HCT116 (cell line): ENCODE measurements at regions of chr2 and their contacts with region 1.

Region 1: GRCh38 chr2:230798769-230799399 is 65.9 kb upstream of the ITM2C start:
- DNase-seq: no peak
- ATAC-seq: 0 out of 2 replicates have a peak, but pooled peaks have one; percentile 33
- H3K4me3 ChIP-seq: no peak overlapping the region
- H3K27ac ChIP-seq: no peak overlapping the region
- H3K4me1 ChIP-seq: peaks cover 32 to 48% of the 10 kb centered on the region in 2 experiments
- H3K27me3 ChIP-seq: no peaks in the 10 kb centered on the region
- CTCF ChIP-seq: peak; percentile 61 to 83 (median 61)
- POLR2A ChIP-seq: no peak
- RAD21 ChIP-seq: peak; percentile 92

Region 2: DNA sequence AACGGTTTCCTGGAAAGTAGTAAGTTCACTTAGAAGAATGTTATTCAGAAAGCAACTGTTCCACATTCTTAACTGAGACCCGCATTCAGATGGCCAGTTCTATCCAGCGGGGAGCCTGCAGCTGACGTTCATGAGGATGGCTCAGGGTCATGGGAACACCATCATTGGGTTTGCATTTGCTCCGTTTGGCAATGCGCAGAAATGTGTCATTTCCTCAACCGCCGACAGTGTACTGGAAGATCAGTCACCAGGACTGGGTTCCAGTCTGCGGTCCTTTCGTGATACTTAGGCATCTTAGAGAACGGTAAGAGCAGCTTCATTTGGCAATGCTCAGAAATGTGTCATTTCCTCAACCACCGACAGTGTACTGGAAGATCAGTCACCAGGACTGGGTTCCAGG is 1188.6 kb before region 1 on chr2:
- CTCF ChIA-PET with region 1: no interaction called
- POLR2A ChIA-PET with region 1: no interaction called
- RAD21 ChIA-PET with region 1: no interaction called
- intact Hi-C with region 1: no loop called
- DNase-seq: no peak
- ATAC-seq: no peak
- H3K4me3 ChIP-seq: no peak overlapping the region
- H3K27ac ChIP-seq: no peak overlapping the region
- H3K4me1 ChIP-seq: no peaks in the 10 kb centered on the region
- H3K27me3 ChIP-seq: no peaks in the 10 kb centered on the region
- CTCF ChIP-seq: no peak
- POLR2A ChIP-seq: no peak
- RAD21 ChIP-seq: no peak

Region 3: DNA sequence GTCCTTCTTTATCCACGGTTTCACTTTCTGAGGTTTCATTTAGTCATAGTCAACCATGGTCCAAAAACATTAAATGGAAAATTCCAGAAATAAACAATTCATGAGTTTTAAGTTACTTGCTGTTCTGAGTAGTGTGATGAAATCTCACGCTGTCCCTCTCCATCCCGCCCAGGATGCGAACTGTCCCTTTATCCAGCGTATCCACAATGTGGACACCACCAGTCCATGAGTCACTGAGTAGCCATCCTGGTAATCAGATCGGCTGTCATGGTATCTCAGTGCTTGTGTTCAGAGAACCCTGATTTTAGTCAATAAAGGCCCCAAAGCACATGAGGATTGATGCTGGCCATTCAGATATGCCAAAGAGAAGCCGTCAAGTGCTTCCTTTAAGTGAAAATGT is 468.2 kb before region 1 on chr2:
- CTCF ChIA-PET with region 1: no interaction called
- POLR2A ChIA-PET with region 1: no interaction called
- RAD21 ChIA-PET with region 1: no interaction called
- intact Hi-C with region 1: loop called (anchors 10 kb)
- DNase-seq: no peak
- ATAC-seq: no peak
- H3K4me3 ChIP-seq: no peak overlapping the region
- H3K27ac ChIP-seq: no peak overlapping the region
- H3K4me1 ChIP-seq: peaks cover 3 to 21% of the 10 kb centered on the region in 2 experiments; a peak in 3 of 4 replicates
- H3K27me3 ChIP-seq: no peaks in the 10 kb centered on the region
- CTCF ChIP-seq: no peak
- POLR2A ChIP-seq: no peak
- RAD21 ChIP-seq: no peak

Region 4: DNA sequence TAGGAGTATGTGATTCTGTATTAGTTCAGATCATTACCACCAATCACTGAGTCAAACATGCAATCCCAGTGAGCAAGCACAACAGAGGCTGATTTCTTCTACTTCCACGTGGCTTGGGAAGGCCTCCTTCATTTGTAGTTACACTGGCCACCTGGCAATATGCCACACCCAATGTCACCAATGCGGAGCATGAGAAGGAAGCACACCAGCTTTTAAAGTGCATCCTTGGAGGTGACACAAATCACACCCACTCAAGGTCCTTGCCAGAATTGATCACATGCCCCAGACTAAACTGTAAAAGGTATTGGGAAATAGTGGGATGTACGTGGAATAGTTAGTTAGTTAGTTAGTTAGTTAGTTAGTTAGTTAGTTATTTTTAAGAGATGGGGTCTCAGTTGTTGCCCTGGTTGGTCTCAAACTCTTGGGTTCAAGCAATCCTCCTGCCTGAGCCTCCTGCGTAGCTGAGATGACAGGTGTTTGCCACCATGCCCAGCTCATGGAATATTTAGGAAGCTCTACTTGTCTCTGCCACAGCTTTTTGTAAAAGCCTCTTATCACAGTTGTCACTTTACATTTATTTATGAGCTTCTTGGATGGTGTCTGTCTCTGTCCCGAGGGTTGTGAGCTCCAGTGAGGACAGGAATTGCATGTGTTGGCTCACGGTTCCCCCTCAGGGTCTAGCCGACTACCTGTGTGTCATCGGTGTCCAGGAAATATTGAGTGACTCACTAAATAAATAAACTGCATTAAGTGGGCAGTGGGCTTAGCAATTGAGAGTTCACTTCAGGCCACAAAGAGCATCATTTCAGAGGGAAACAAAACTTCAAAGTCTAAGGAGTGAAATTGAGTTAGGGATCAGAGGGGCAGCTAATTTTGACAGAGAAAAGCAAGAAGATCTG is 114.4 kb before region 1 on chr2:
- CTCF ChIA-PET with region 1: interaction called, 7 read pairs
- POLR2A ChIA-PET with region 1: no interaction called
- RAD21 ChIA-PET with region 1: no interaction called
- intact Hi-C with region 1: loop called (anchors 10 kb)
- DNase-seq: peak; percentile 52
- ATAC-seq: peak; percentile 74
- H3K4me3 ChIP-seq: no peak overlapping the region
- H3K27ac ChIP-seq: peak overlapping the region; percentile 46
- H3K4me1 ChIP-seq: peaks cover 44 to 56% of the 10 kb centered on the region in 2 experiments
- H3K27me3 ChIP-seq: no peaks in the 10 kb centered on the region
- CTCF ChIP-seq: no peak
- POLR2A ChIP-seq: no peak
- RAD21 ChIP-seq: peak; percentile 24

Region 5: DNA sequence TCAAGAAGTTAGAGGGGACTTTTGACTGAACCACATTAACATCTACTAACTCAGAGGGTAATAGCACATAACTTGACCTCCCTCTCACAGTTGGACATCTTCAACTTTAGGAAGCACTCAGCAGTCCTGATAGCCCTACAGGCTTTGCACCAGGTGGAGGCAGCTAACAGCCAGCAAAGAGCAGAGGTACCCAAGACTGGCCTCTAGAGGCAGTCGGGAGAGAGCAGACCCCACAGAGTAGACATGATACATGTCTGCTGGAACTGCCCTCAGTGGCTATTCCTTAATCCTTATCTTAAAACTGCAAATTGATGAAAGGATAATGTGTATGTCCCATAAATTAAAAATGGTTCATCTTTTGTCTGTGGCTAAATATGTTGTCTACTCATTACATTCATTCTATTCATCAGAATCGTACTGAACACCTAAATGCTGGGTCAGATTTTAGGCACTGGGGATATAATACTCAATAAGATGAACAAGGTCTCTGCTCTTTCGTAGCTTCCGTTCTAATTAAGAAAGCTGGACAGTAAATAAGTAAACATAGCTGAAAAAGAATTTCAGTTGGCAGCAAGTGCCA is 36.5 kb before region 1 on chr2:
- CTCF ChIA-PET with region 1: interaction called, 6 read pairs
- POLR2A ChIA-PET with region 1: no interaction called
- RAD21 ChIA-PET with region 1: interaction called in 1 of 2 experiments, 3 read pairs
- intact Hi-C with region 1: loop called (anchors 5 kb)
- DNase-seq: no peak
- ATAC-seq: peak; percentile 100
- H3K4me3 ChIP-seq: no peak overlapping the region
- H3K27ac ChIP-seq: no peak overlapping the region
- H3K4me1 ChIP-seq: no peaks in the 10 kb centered on the region
- H3K27me3 ChIP-seq: no peaks in the 10 kb centered on the region
- CTCF ChIP-seq: peak; percentile 76 to 94 (median 83)
- POLR2A ChIP-seq: no peak
- RAD21 ChIP-seq: peak; percentile 68